PC-9 (cell line): ENCODE measurements at regions of chr3 and their contacts with region 1.

Region 1: GRCh38 chr3:45437383-45437782 is 49.0 kb downstream of the LARS2 start:
- DNase-seq: no peak
- H3K4me3 ChIP-seq: no peak overlapping the region
- H3K27ac ChIP-seq: no peak overlapping the region
- H3K4me1 ChIP-seq: no peaks in the 10 kb centered on the region
- H3K27me3 ChIP-seq: no peaks in the 10 kb centered on the region
- CTCF ChIP-seq: no peak

Region 2: DNA sequence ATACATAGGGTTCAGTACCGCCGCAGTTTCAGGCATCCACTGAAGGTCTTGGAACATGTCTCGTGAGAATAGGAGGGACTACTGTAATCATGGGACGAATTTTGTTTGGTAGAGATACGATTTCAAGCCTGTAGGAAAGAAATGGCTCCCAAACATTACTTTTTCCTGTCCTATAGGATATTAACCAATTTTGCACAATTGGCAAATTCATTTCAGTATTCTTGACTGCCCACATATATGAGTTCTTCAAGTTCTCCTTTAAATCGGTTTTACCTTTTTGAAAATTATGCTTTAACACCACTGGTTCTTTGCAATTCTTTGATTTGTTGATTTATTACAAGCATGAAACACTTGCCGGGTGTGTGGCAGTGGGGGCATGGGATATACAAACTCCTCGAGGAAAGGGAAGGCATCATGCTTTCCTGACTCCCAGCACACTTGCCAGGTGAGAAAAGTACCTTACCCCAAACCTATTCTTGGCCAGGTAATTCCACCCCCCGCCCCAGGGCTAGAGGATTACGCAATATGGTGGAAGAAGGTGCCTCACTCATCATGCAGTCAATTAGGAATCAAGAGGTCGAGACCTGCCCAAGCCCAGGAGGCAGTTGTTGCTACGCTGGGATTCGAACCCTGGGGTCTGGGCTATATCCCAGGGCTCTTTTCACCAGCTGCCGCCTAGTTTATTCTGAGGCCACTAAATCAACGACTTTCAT is 49.6 kb before region 1 on chr3:
- CTCF ChIA-PET with region 1: no interaction called
- POLR2A ChIA-PET with region 1: interaction called, 11 read pairs
- intact Hi-C with region 1: no loop called
- DNase-seq: peak in 1 of 2 experiments; percentile 50
- H3K4me3 ChIP-seq: peak overlapping the region; percentile 87; the same call in 1 of the 2 replicates
- H3K27ac ChIP-seq: 0 out of 2 replicates have a peak overlapping the region, but pooled peaks have one; percentile 38
- H3K4me1 ChIP-seq: peaks cover 13% of the 10 kb centered on the region; the same call in 1 of the 2 replicates
- H3K27me3 ChIP-seq: no peaks in the 10 kb centered on the region
- CTCF ChIP-seq: no peak